H1 (cell line): ENCODE measurements at regions of chr3 and their contacts with region 1.

Region 1: GRCh38 chr3:71926262-71926600 is 141.3 kb upstream of the PROK2 start:
- DNase-seq: peak; percentile 43 to 70
- H3K4me3 ChIP-seq: no peak overlapping the region
- H3K27ac ChIP-seq: no peak overlapping the region
- H3K4me1 ChIP-seq: peaks cover 6 to 19% (median 11%) of the 10 kb centered on the region in 4 experiments; a peak in 6 of 7 replicates
- H3K27me3 ChIP-seq: no peaks in the 10 kb centered on the region
- CTCF ChIP-seq: peak; percentile 36 to 88 (median 79)
- EP300 ChIP-seq: no peak
- POLR2A ChIP-seq: no peak
- RAD21 ChIP-seq: peak; percentile 82 to 87

Region 2: DNA sequence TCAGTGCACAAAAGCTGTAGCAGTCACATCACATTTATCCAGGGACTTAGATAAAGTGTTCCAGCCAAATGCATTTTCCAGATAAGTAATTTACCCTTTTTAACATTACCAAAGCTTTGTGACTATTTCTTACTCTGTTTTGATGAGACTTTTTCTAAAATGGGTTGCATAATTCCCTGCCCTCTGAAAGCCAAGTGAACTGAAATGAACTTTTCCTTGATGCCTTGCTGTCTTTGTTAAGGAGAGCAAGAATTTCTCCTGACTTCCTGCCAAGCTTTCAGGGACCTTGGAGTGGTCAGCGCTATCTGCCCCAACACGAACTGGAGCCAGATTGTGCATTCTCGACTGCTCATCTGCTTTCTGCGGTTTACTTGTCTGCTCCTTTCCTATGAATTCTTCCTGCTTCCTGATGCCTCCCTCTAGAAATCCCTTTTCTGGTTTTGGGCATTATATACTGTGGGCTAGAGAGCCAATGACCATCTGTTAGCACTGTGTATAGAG is 235.8 kb before region 1 on chr3:
- CTCF ChIA-PET with region 1: no interaction called
- POLR2A ChIA-PET with region 1: no interaction called
- DNase-seq: no peak
- H3K4me3 ChIP-seq: no peak overlapping the region; a peak in 1 of 8 replicates
- H3K27ac ChIP-seq: no peak overlapping the region
- H3K4me1 ChIP-seq: peaks cover 4 to 11% (median 9%) of the 10 kb centered on the region in 4 experiments; a peak in 6 of 7 replicates
- H3K27me3 ChIP-seq: no peaks in the 10 kb centered on the region
- CTCF ChIP-seq: no peak
- EP300 ChIP-seq: no peak
- POLR2A ChIP-seq: no peak
- RAD21 ChIP-seq: no peak

Region 3: DNA sequence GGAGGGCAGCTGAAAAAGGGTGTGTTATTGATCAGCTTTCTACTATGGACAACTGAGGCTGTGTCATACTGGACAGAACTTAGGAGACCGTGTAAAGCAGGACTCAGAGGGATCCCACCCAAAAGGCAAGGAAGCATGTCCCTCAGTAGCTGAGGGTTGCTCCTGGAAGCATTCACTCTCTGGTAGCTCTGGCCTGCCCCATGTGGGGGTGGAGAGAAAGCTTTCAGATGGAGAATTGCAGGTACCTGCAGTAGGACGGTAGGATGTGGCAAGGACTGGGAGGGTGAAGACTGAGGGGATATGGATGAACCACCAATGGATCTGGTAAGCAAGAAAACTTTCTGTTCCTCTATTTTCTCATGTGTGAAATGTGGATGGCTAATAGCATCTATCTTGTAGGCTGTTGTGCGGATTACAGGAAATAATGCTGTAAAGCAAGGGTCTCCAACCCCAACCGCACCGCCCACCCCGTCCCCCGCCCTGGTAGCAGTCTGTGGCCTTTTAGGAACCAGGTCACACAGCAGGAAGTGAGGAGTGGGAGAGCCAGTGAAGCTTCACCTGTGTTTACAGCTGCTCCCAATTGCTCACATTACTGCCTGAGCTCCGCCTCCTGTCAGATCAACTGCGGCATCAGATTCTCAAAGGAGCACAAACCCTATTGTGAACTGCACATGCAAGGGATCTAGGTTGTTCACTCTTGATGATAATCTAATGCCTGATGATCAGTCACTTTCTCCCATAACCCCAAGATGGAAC is 16.4 kb after region 1 on chr3:
- CTCF ChIA-PET with region 1: interaction called, 27 read pairs
- POLR2A ChIA-PET with region 1: interaction called, 3 read pairs
- DNase-seq: no peak
- H3K4me3 ChIP-seq: no peak overlapping the region
- H3K27ac ChIP-seq: no peak overlapping the region
- H3K4me1 ChIP-seq: peaks cover 0 to 3% (median 1%) of the 10 kb centered on the region in 4 experiments; a peak in 1 of 7 replicates
- H3K27me3 ChIP-seq: peaks cover 0 to 1% (median 0%) of the 10 kb centered on the region in 4 experiments; a peak in 1 of 7 replicates
- CTCF ChIP-seq: peak; percentile 40 to 59 (median 50); a peak in 3 of 4 replicates
- EP300 ChIP-seq: no peak
- POLR2A ChIP-seq: no peak
- RAD21 ChIP-seq: peak; percentile 23 to 56; a peak in 3 of 4 replicates

Region 4: DNA sequence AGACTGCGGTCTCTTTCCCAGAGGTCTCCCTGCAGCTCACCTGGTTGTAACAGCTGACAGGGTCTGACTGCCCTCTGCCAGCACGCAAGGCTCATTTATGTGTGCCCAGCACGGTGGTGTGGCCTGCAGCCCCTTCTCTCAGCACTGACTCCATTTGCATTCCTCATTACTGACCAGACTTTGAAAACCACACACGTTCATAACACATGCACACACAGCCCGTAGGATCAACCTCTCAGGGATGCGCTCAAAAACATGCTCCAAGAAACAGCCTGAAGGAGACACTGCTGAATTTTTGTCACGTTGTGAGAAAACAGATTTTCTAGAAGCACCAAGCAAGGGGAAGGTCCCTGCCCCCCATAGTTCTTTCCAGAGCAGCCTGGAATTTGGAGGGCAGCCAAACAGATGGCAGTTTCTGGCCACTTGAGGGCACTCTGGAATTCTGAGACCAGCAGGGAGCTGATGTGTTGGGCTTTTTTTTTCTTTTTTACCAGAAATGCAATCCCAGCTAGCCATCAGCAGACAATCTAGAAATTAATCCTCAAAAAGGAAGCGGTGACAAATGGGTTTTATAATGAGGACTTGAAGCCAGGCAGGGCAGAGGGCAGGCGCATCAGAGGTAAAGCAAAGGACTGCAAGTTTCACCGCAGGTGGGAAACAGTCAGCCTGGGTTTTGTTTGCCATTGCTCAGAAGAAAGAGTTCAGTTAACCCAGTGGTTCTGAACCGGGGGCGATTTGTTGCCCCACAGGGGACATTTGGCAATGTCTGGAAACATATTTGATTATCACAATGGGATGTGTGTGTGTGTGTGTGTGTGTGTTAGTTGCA is 29.2 kb after region 1 on chr3:
- CTCF ChIA-PET with region 1: interaction called, 46 read pairs
- POLR2A ChIA-PET with region 1: no interaction called
- DNase-seq: peak; percentile 38 to 66
- H3K4me3 ChIP-seq: no peak overlapping the region
- H3K27ac ChIP-seq: no peak overlapping the region
- H3K4me1 ChIP-seq: peaks cover 7 to 16% (median 11%) of the 10 kb centered on the region in 4 experiments
- H3K27me3 ChIP-seq: no peaks in the 10 kb centered on the region
- CTCF ChIP-seq: peak; percentile 62 to 81 (median 72)
- EP300 ChIP-seq: no peak
- POLR2A ChIP-seq: no peak
- RAD21 ChIP-seq: peak; percentile 82 to 83

Region 5: GRCh38 chr3:71984843-71985613 is 58.8 kb after region 1 on chr3:
- CTCF ChIA-PET with region 1: interaction called, 11 read pairs
- POLR2A ChIA-PET with region 1: no interaction called
- DNase-seq: no peak
- H3K4me3 ChIP-seq: no peak overlapping the region
- H3K27ac ChIP-seq: no peak overlapping the region
- H3K4me1 ChIP-seq: no peaks in the 10 kb centered on the region
- H3K27me3 ChIP-seq: no peaks in the 10 kb centered on the region
- CTCF ChIP-seq: no peak
- EP300 ChIP-seq: no peak
- POLR2A ChIP-seq: no peak
- RAD21 ChIP-seq: no peak

Region 6: GRCh38 chr3:72265256-72266015 is 339.2 kb after region 1 on chr3:
- CTCF ChIA-PET with region 1: interaction called, 16 read pairs
- POLR2A ChIA-PET with region 1: no interaction called
- DNase-seq: no peak
- H3K4me3 ChIP-seq: no peak overlapping the region
- H3K27ac ChIP-seq: no peak overlapping the region
- H3K4me1 ChIP-seq: peaks cover 0 to 6% (median 0%) of the 10 kb centered on the region in 4 experiments; a peak in 1 of 7 replicates
- H3K27me3 ChIP-seq: no peaks in the 10 kb centered on the region
- CTCF ChIP-seq: peak in 2 of 3 experiments; percentile 41 to 52; a peak in 3 of 4 replicates
- EP300 ChIP-seq: no peak
- POLR2A ChIP-seq: no peak
- RAD21 ChIP-seq: peak; percentile 80 to 81